Posterior vena cava (tissue), 2 donors: ENCODE measurements at regions of chr4 and their contacts with region 1.

Region 1: DNA sequence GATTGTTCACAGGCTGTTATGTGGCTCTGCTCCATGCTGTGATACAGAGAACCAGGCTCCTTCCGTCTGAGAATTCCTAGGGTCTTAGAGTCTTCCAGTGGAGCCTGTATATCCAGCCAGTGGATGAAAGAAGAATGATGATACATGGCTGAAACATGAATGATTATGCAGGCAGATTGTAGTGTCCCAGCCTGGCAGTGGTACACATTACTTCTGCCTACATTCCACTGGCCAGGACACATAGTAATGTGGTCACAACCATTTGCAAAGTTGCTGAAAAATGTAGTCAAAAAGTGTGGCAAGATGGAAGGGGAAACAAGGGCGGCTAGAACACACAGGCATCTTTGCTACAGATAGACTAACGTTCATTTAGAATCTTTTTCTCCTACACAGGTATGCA is 4.5 kb upstream of the GBA3 start:
- DNase-seq: no peak

Region 2: GRCh38 chr4:21790438-21791029 is 897.7 kb before region 1 on chr4:
- intact Hi-C with region 1: loop called in 1 of 2 experiments (anchors 5 kb)
- DNase-seq: no peak

Region 3: DNA sequence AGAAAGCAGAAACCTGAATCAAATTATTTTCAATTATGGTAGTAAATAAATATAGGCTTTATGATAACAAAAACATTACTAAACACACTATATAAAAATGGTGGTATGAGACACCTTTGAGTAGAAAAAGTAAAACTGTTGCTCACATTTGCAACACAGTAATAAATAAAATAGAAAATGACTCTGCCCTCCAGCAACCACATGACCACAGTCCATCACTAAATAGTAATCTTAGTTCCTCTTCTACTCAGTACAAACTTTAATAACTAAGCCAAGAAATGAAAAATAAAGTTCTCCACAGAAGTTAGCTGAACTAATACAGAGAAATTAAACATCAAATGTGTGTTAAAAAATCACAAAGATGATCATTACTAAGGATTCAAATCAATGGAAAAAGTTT is 280.9 kb before region 1 on chr4:
- intact Hi-C with region 1: loop called in 1 of 2 experiments (anchors 2 kb)
- DNase-seq: no peak

Region 4: DNA sequence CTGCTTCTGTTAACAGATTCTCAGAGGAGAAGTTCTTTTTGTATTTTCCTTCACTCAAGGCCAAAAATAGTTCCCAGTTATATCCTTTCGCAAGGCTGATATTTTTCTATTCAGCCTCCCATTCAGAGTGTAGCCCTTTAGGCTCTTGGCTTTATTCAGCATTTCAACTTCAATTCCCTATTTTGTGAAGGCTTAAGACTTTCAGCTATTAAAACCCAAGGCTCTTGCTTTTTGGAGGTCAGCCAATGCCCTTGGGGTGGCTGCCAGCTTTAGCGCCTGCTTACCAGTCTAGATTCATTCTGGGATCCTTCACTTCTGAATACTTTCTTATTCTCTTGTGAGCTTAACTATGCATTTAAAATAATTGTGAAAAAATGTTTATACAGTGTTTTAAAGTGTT is 115.0 kb before region 1 on chr4:
- intact Hi-C with region 1: no loop called
- DNase-seq: peak; percentile 86